HEK293 (cell line): ENCODE measurements at regions of chr12 and their contacts with region 1.

Region 1: DNA sequence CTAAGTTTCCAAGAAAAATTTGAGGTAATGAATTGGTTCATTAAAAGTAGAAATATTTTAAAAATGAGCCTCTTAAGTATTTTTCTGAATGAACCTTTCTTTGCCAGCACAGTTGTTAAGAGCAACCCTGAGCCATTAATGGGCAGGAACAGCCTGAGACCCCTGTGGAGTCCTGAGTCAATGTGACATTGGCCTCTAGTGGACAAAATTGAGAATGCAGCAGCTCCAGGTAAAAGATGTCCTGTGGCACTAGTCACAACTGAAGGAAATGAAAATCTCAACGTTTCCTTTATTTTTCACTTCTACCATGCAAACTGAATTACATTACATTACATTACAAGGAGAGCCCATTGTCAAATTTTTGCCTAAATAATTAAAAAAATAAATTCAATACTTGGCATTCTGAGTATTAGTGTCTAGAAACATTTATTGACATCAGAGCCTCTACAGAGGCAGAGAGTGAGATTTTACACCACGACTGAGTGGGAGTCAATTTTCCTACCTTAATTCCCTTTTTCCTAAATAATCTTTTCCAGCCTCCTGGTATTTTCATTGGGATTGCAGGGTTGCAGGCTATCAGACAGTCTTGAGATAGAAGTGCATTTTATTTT is 135.7 kb downstream of the PPM1H start:
- H3K4me3 ChIP-seq: no peak overlapping the region
- H3K27ac ChIP-seq: no peak overlapping the region
- H3K4me1 ChIP-seq: peaks cover 3% of the 10 kb centered on the region; the same call in 1 of the 2 replicates
- CTCF ChIP-seq: peak; percentile 35; the same call in 1 of the 2 replicates

Region 2: GRCh38 chr12:62581288-62582064 is 217.8 kb before region 1 on chr12:
- CTCF ChIA-PET with region 1: interaction called, 58 read pairs
- POLR2A ChIA-PET with region 1: no interaction called
- H3K4me3 ChIP-seq: no peak overlapping the region
- H3K27ac ChIP-seq: no peak overlapping the region
- H3K4me1 ChIP-seq: no peaks in the 10 kb centered on the region
- CTCF ChIP-seq: no peak

Region 3: DNA sequence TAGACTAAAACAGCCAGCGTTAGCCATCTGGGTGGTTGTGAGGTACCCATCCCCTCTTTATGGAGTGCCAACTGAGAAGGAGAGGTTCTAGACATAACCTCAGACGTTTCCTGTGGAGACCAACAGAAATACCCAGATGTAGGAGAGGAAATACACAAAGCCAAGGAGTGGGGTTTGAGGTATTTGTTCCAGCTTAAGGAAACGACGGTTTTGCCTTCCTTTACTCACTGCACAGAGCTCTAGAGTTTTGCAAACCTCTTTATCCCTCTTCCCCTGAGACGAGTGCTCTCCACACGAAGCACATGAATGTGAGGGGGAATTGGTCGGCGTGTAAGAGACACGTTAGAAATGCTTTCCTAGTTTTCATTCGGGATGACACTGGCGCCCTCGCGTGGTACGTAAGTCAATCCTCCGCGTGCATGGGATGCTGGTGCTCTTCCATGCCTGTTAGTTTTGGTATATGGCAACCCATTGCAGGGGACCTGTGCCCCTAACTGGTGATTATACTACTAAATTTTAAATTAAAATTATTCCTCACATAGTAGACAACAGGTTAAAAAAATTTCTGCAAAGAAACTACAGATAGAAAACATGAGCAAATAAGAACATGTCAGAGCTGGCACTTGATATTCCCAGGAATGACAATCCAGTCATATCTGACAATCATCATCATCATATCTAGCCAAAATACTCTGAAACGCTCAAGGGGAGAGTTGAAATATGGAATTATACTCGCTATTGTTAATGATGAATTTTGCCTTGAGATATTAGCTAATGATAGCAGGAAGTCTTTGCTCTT is 14.0 kb after region 1 on chr12:
- CTCF ChIA-PET with region 1: interaction called, 21 read pairs
- POLR2A ChIA-PET with region 1: no interaction called
- H3K4me3 ChIP-seq: no peak overlapping the region
- H3K27ac ChIP-seq: no peak overlapping the region
- H3K4me1 ChIP-seq: peaks cover 6% of the 10 kb centered on the region
- CTCF ChIP-seq: peak; percentile 35; the same call in 1 of the 2 replicates